Activated B cell treated with CpG ODN at 0.5 μM for 24 hours (primary cell): ENCODE measurements at regions of chr6 and their contacts with region 1.

Region 1: DNA sequence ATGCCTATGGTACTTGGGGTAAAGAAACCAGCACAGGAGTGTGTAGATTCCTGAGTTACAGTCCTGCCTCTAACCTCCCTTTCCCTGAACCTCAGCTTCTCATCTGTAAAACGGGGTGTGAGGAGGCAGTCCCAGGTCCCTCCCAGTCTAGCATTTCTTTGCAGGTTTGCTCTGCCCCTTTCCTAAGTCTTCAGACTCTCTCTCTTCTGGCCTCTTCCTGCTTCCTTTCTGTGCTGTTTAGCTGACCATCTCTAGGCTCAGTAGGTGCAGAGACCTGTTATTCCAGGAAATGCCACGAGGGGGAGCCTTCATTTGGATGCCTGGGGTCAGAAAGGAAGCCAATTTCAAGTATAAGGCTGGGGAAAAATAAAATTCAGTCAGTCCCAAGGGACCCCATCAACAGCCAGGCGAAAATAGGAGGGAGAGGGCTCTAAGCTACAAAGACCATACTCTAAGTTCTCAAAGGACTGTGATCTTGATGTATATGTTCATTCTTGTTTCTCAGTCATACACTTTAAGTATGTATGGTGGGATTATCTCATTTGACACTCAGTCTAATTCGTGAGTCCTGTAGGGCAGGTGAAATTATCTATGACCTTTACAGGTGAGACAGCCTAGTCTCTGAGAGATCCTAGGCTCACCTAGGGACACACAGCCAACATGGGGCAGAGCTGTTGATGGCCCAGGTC is 89.1 kb downstream of the NCR2 start:
- DNase-seq: peak; percentile 62
- ATAC-seq: peak; percentile 45
- H3K4me3 Mint-ChIP-seq: no peak overlapping the region
- H3K27ac Mint-ChIP-seq: no peak overlapping the region
- H3K4me1 Mint-ChIP-seq: peaks cover 10% of the 10 kb centered on the region
- H3K27me3 Mint-ChIP-seq: peaks cover 11% of the 10 kb centered on the region
- CTCF ChIP-seq: peak; percentile 60

Region 2: GRCh38 chr6:41367700-41368099 is 56.8 kb before region 1 on chr6:
- CTCF ChIA-PET with region 1: interaction called, 7 read pairs
- POLR2A ChIA-PET with region 1: interaction called, 3 read pairs
- intact Hi-C with region 1: loop called (anchors 1 kb)
- DNase-seq: no peak
- ATAC-seq: no peak
- H3K4me3 Mint-ChIP-seq: no peak overlapping the region
- H3K27ac Mint-ChIP-seq: no peak overlapping the region
- H3K4me1 Mint-ChIP-seq: peaks cover 19% of the 10 kb centered on the region
- H3K27me3 Mint-ChIP-seq: peaks cover 55% of the 10 kb centered on the region
- CTCF ChIP-seq: no peak

Region 3: DNA sequence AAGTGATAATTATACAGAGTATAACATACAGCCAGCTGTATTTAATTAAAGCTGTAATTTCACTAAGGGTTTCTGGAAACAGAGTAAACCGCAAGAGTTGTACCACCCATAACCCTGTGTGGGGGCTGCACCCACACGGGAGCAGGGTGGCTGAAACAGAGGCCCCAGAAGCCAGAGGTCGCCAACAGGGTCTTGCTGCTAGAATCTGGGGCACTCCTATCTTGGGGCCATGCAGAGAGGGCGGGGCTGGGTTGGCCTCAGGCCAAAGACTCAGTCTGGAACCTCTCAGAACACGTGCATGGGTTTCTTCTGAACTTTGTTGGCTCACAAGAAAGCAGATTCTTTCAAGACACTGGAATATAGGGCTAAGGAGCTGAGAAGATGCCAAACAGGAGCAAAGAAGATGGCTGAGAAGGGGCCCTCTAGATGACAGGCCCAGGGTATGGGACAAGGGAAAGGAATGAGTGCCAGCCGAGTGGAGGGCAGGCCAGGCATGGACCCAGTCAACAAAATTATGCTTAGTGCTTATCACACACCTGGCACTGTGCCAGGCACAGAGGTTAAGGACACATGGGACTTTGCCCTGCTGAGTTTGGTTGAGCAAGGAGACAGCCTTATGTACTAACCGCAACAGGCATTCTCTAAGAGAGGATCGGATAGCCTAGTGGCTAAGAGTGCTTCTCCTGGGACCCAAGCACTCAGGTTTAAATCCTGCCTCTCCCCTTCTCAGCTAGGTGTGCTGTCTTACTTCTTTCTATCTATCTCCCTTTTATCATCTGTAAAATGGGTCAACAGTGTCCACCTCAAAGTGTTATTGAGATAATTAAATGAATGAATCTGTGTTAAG is 25.1 kb after region 1 on chr6:
- CTCF ChIA-PET with region 1: interaction called, 11 read pairs
- POLR2A ChIA-PET with region 1: interaction called, 5 read pairs
- intact Hi-C with region 1: no loop called
- DNase-seq: no peak
- ATAC-seq: no peak
- H3K4me3 Mint-ChIP-seq: no peak overlapping the region
- H3K27ac Mint-ChIP-seq: no peak overlapping the region
- H3K4me1 Mint-ChIP-seq: no peaks in the 10 kb centered on the region
- H3K27me3 Mint-ChIP-seq: peaks cover 3% of the 10 kb centered on the region
- CTCF ChIP-seq: no peak

Region 4: DNA sequence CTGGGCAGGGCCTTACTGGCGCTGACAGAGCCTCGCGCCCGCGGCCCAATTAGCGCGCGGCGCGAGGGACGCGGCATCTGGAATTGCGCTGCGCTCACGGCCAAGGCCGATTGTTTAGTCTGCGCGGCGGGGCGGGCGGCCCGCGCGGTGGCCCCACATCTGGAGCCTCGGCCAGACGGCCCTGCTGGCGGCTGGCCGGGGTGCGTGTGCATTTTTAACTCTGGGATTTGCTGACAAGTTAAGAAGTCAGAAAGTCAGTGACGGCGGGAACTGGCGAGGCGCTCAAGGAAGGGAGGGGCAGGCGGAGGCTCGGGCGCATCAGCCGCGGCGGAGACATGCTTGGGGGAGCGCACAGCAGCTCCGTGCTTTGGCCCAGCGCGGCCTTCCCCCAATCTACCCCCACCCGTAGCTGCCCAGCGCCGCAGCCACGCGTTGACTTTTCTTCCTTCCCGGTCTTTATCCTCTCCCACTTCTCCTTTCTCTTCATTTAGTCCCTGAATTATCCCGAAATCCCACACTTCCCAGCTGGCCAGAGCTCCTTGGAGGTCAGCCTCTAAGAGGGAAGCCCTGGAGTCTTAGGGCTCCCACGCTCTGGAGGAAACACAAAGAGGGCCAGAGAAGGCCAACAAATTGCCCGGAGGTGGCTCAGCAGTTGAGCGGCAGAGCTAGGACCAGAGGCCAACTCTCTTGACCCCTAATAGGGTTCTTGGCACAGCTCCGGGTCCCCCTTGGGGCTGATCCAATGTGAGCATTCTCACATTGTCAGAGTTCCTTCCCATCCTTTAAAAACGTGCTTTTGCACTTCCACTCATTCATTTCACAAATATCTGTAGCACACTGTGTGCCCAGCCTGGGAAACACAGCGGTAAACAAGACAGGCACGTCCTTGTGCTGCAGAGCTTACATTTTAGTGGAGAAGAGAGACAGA is 80.9 kb after region 1 on chr6:
- CTCF ChIA-PET with region 1: interaction called, 7 read pairs
- POLR2A ChIA-PET with region 1: interaction called, 7 read pairs
- intact Hi-C with region 1: loop called (anchors 1 kb)
- DNase-seq: peak; percentile 66
- ATAC-seq: peak; percentile 86
- H3K4me3 Mint-ChIP-seq: peak overlapping the region; percentile 81
- H3K27ac Mint-ChIP-seq: peak overlapping the region; percentile 92
- H3K4me1 Mint-ChIP-seq: peaks cover 43% of the 10 kb centered on the region
- H3K27me3 Mint-ChIP-seq: no peaks in the 10 kb centered on the region
- CTCF ChIP-seq: no peak

Region 5: GRCh38 chr6:41591859-41592502 is 167.5 kb after region 1 on chr6:
- CTCF ChIA-PET with region 1: interaction called, 40 read pairs
- POLR2A ChIA-PET with region 1: no interaction called
- intact Hi-C with region 1: loop called (anchors 1 kb)
- DNase-seq: peak; percentile 73
- ATAC-seq: peak; percentile 85
- H3K4me3 Mint-ChIP-seq: no peak overlapping the region
- H3K27ac Mint-ChIP-seq: no peak overlapping the region
- H3K4me1 Mint-ChIP-seq: peaks cover 4% of the 10 kb centered on the region
- H3K27me3 Mint-ChIP-seq: no peaks in the 10 kb centered on the region
- CTCF ChIP-seq: peak; percentile 19